PC-3 (cell line): ENCODE measurements at regions of chr1 and their contacts with region 1.

Region 1: DNA sequence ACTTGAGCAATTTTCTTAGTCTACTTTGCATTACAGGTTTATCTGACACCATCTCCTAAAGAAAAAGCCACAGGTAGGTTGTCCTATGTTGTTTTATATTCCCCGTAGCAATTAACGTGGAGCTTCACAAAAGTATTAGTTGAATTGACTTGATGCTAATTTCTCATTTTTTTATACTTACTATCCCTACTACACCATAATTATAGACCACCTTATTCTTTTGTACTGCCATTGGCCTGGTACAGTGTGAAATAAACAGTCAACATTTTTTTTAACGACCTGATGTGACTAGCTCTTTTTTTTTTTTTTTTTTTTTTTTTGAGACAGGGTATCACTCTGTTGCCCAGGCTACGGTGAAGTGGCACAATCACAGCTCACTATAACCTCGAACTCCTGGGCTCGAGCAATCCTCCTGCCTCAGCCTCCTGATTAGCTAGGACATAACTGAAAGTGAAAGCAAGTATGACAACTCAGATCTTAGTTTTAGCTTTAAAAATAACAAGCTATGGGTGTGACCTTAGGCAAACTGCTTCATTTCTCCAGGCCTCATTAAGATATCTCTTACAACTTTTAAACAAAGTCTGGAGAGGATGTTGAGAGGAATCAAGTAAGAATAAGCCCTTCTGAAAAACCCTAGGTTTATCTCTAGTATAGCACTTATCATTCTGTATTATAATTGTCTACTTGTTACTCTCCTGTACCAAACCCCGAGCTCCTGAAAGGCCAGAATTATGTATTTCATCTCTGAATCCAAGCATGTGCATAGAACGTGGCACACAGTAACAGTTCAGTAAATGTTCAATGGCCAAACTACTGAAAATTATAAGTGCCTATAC is 49.5 kb downstream of the LUZP1 start:
- DNase-seq: no peak
- ATAC-seq: 0 out of 2 replicates have a peak, but pooled peaks have one; percentile 15
- H3K4me3 ChIP-seq: no peak overlapping the region
- H3K27ac ChIP-seq: no peak overlapping the region
- H3K4me1 ChIP-seq: peaks cover 9% of the 10 kb centered on the region; the same call in 1 of the 2 replicates
- H3K27me3 ChIP-seq: no peaks in the 10 kb centered on the region
- CTCF ChIP-seq: no peak

Region 2: GRCh38 chr1:23004112-23004511 is 115.1 kb before region 1 on chr1:
- CTCF ChIA-PET with region 1: no interaction called
- POLR2A ChIA-PET with region 1: no interaction called
- intact Hi-C with region 1: no loop called
- DNase-seq: peak; percentile 81
- ATAC-seq: no peak; the same call in 1 of the 2 replicates
- H3K4me3 ChIP-seq: no peak overlapping the region
- H3K27ac ChIP-seq: peak overlapping the region; percentile 89
- H3K4me1 ChIP-seq: peaks cover 19% of the 10 kb centered on the region
- H3K27me3 ChIP-seq: no peaks in the 10 kb centered on the region
- CTCF ChIP-seq: no peak

Region 3: DNA sequence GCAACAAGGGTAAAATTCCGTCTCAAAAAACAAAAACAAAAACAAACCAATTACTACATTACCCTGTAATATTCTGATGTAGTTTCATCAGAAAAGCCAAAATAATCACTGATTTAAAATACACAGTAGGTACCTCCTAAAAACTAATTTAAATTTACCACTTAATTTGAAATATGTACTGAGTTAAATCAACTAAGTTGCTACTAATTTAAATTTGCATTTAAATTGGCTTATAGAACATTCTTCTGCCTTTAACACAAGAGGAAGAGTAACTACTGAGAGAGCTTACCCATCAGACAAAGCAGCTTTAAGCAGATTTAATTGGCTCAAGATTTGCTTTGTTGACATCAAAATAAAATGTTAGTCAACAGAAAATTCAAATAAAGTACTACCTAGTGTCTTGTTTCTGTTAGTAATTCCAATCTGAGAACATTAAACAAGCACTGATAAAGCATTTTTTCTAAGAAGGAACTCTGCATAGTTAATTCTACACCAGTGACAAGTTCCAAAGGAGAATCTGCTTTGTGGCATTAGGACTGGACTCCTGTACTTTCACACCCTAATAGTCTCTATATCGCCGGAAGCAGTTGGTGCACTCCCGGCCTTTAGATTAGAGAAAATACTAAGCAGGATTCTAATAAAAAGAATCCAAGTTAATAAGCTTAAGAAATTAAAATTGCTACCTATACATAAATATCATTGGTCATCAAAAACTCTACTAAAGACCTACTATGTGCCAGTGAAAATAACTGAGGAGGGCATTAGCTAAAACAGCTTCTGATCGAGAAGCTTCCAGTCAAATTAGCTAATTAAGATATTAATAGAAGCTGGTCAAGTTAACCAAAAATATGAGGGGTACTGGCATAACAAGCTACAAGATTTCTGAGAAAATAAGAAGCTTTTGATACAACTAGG is 41.0 kb after region 1 on chr1:
- CTCF ChIA-PET with region 1: no interaction called
- POLR2A ChIA-PET with region 1: interaction called, 15 read pairs
- intact Hi-C with region 1: loop called (anchors 5 kb)
- DNase-seq: no peak
- ATAC-seq: no peak
- H3K4me3 ChIP-seq: no peak overlapping the region
- H3K27ac ChIP-seq: peak overlapping the region; percentile 32
- H3K4me1 ChIP-seq: peaks cover 11% of the 10 kb centered on the region; the same call in 1 of the 2 replicates
- H3K27me3 ChIP-seq: no peaks in the 10 kb centered on the region
- CTCF ChIP-seq: no peak

Region 4: GRCh38 chr1:23168457-23169194 is 49.5 kb after region 1 on chr1 and contains the start of gene LUZP1:
- CTCF ChIA-PET with region 1: no interaction called
- POLR2A ChIA-PET with region 1: interaction called, 15 read pairs
- intact Hi-C with region 1: no loop called
- DNase-seq: peak; percentile 82
- ATAC-seq: peak; percentile 74
- H3K4me3 ChIP-seq: peak within 1 kb of the TSS; percentile 98
- H3K27ac ChIP-seq: peak within 1 kb of the TSS; percentile 61
- H3K4me1 ChIP-seq: peaks cover 12% of the 10 kb centered on the region; the same call in 1 of the 2 replicates
- H3K27me3 ChIP-seq: no peaks in the 10 kb centered on the region
- CTCF ChIP-seq: no peak
- total RNA-seq, gene LUZP1: 17.5 and 17.8 TPM in 2 replicates

Region 5: GRCh38 chr1:23194119-23194984 is 75.2 kb after region 1 on chr1:
- CTCF ChIA-PET with region 1: no interaction called
- POLR2A ChIA-PET with region 1: no interaction called
- intact Hi-C with region 1: no loop called
- DNase-seq: peak; percentile 77
- ATAC-seq: peak; percentile 21
- H3K4me3 ChIP-seq: peak overlapping the region; percentile 10; the same call in 1 of the 2 replicates
- H3K27ac ChIP-seq: peak overlapping the region; percentile 96
- H3K4me1 ChIP-seq: peaks cover 58% of the 10 kb centered on the region
- H3K27me3 ChIP-seq: no peaks in the 10 kb centered on the region
- CTCF ChIP-seq: no peak

Region 6: DNA sequence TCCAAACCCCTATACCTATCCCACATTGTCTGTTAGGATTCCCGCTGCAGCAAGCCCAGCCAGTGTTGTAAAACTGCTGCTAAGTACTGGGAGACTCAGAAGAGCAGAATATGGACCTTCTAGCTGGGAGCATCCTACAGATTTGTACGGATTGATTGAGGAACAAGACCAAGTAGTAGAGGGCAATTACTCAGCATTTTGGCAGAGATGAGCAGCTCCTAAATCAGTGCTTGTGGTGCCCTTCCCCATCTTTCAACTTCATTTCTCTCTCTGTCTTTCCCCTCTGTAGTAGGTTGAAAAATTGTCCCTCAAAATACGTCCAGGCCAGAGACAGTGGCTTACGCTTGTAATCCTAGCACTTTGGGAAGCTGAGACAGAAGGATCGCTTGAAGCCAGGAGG is 135.4 kb after region 1 on chr1:
- CTCF ChIA-PET with region 1: no interaction called
- POLR2A ChIA-PET with region 1: no interaction called
- intact Hi-C with region 1: no loop called
- DNase-seq: no peak
- ATAC-seq: no peak
- H3K4me3 ChIP-seq: no peak overlapping the region
- H3K27ac ChIP-seq: no peak overlapping the region
- H3K4me1 ChIP-seq: peaks cover 1% of the 10 kb centered on the region; the same call in 1 of the 2 replicates
- H3K27me3 ChIP-seq: no peaks in the 10 kb centered on the region
- CTCF ChIP-seq: no peak